ENCODE measurements at regions of chr2 and their contacts with region 1.

Region 1: DNA sequence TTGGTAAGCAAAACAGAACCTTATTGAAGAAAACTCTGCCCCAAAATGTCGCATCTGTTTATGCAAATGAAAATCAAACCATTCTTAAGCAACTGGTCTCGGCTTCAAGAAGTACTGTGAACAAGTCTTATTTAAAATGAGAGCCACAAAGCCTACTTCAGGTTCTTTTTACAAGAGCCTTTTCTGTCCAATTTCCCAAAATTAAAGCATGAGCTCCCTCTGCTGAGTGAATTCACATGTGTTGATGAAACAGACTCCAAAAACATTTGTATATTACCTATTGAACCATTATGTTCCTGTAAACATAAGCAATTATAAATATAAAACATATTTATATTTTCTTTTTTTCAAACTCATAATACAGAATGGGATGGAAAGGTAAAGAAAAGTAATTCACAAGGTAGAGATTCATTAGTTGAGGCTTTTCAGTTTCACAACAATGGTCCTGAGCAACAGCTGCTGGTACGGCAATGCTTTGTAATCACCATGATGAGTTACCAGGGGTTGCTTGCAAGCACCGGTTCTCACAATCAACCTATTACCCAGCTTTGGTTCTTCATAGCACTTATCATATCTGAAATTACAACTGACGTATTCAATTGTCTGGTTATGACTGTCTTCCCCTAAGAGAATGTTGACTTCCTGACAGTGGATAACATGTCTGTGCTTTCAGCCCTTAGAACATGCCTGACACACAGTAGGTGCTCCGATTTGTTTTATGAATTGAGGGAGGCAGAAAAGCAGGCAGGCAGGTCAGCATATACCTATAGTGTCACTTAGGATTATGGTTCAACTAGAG is 108.4 kb upstream of the BZW1 start:
- DNase-seq: no peak
- H3K4me3 ChIP-seq: no peak overlapping the region
- H3K27ac ChIP-seq: no peak overlapping the region
- H3K4me1 ChIP-seq: no peaks in the 10 kb centered on the region
- H3K27me3 ChIP-seq: no peaks in the 10 kb centered on the region
- CTCF ChIP-seq: peak in 1 of 3 experiments; percentile 39
- POLR2A ChIP-seq: no peak

Region 2: DNA sequence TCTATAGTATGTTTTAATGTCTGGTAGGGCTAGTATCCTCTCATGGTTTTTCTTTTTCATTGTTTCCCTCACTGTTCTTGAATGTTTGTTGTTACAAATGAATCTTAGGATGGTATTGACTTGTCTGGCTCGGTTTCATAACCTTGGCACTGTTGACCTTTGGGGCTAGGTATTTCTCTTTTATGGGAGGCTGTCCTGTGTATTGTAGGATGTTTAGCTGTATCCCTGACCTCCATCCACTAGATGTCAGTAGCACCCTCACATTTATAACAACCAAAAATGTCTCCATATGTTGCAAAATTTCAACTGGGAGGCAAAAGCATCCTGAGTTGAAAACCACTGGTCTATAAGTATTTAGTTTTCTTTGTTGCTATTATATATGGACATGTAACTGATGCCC is 124.5 kb before region 1 on chr2:
- intact Hi-C with region 1: loop called (anchors 5 kb)
- DNase-seq: no peak
- H3K4me3 ChIP-seq: no peak overlapping the region
- H3K27ac ChIP-seq: no peak overlapping the region
- H3K4me1 ChIP-seq: no peaks in the 10 kb centered on the region
- H3K27me3 ChIP-seq: no peaks in the 10 kb centered on the region
- CTCF ChIP-seq: peak in 1 of 3 experiments; percentile 32
- POLR2A ChIP-seq: no peak

Region 3: GRCh38 chr2:200814917-200815316 is 111.6 kb after region 1 on chr2:
- intact Hi-C with region 1: no loop called
- DNase-seq: no peak
- H3K4me3 ChIP-seq: no peak overlapping the region
- H3K27ac ChIP-seq: no peak overlapping the region
- H3K4me1 ChIP-seq: peaks cover 39% of the 10 kb centered on the region
- H3K27me3 ChIP-seq: no peaks in the 10 kb centered on the region
- CTCF ChIP-seq: no peak
- POLR2A ChIP-seq: no peak

Region 4: DNA sequence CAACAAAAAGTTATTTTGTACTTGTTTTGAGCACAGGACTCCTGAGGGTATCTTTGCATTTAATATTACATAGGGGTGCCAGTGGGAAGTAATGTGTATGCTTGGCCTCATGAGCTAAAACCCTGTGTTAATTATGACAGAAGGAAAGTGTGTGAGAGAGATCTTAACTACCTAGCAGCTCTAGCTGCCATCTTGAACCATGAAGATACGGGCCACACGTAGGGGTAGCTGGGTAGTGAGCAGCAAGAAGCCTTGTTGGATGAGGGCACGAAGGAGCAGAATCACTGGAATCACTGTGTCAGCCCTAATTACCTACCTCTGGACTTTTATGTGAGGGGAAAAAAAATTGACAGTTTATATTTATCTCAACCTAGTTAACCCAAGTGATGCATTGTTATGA is 464.2 kb after region 1 on chr2:
- intact Hi-C with region 1: no loop called
- DNase-seq: no peak
- H3K4me3 ChIP-seq: no peak overlapping the region
- H3K27ac ChIP-seq: no peak overlapping the region
- H3K4me1 ChIP-seq: no peaks in the 10 kb centered on the region
- H3K27me3 ChIP-seq: no peaks in the 10 kb centered on the region
- CTCF ChIP-seq: no peak
- POLR2A ChIP-seq: no peak